Activated CD4-positive, alpha-beta memory T cell treated with anti-CD3 and anti-CD28 coated beads for 36 hours (primary cell): ENCODE measurements at regions of chr14 and their contacts with region 1.

Region 1: DNA sequence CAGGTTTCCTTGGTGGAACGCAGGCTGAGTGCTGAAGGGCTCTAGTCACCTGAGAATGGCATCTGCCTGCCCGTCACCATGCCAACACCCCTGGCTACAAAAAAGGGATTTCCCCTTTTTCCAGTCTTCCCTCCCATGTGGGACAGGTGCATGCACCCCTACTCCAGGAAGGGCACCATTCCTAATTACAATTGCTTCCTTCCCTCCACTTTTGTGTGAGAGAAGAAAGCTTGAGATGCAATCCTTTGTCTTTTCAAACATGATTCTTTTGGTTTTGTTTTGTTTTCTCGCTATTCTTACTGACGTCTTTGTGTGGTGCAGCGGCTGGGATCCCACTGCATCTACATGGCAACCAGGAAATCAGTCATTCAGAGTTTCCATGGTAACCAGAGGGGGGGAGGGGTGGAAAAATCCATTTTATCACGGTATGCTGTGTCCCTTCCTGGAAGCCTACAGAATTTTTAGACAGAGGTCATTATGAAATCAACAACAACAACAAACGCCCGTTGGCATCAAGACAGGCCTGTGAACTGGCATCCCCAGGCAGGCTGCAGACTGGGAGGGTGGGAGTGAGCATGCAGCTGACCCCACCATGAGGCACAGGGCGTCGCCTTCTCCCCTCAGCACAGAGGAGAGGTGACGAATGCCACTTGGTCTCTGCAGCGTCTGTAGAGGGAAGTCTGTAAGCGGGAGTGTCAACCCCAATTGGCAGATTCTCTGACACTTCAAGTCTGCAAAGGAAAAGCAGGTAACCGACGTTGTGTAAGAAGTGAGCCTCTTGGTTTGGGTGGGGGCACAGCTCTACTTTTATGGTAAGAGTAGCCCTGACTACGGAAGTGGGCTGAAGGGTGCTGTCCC is 13.6 kb upstream of the GNG2 start:
- DNase-seq: peak; percentile 91
- H3K4me3 Mint-ChIP-seq: peak overlapping the region; percentile 87
- H3K27ac Mint-ChIP-seq: peak overlapping the region; percentile 98
- H3K4me1 Mint-ChIP-seq: peaks cover 75% of the 10 kb centered on the region
- H3K27me3 Mint-ChIP-seq: peaks cover 2% of the 10 kb centered on the region

Region 2: DNA sequence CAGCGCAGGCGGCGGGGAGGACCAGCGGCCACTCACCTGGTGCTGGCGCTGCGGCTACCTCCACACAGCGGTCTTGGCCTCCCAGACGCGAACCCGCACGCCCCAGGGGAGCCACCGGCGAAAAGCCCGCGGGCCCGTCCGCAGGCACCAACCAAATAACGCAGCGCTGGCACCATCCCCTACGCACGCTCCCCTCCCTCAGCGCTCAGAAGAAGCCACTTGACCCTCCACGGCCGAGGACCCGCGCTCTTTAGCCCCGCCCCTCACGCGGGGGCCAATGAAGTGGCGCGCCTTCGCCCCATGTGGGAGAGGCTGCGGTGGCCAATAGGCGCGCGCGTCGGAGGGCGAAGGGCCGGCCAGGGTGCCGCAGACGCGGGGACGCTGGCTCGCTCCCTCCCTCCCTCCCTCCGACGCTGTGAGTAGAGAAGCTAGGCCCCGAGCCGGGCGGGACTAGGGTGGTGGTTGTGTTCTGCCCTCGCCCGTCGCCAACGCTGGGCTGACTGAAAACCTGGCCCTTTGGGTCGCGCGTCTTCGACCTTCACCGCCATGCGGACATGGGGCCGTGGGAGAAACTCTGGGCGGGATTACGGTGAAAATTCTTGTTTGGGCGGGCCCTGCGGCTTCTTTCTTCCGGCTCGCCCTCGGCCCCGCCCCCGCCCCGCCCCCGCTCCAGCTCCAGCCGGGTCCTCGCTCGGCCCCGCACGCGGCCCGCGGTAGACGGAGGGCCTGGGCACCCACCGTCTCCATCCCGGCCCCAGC is 1534.7 kb before region 1 on chr14 and contains the starts of genes DMAC2L and L2HGDH:
- CTCF ChIA-PET with region 1: no interaction called
- POLR2A ChIA-PET with region 1: no interaction called
- intact Hi-C with region 1: loop called (anchors 5 kb)
- DNase-seq: peak; percentile 93
- H3K4me3 Mint-ChIP-seq: peak within 1 kb of the TSS; percentile 96
- H3K27ac Mint-ChIP-seq: peak within 1 kb of the TSS; percentile 94
- H3K4me1 Mint-ChIP-seq: peaks cover 37% of the 10 kb centered on the region
- H3K27me3 Mint-ChIP-seq: no peaks in the 10 kb centered on the region
- total RNA-seq, gene DMAC2L: 13.4 to 13.9 TPM
- total RNA-seq, gene L2HGDH: 15.0 to 15.2 TPM

Region 3: GRCh38 chr14:51651388-51652167 is 195.3 kb before region 1 on chr14 and contains the start of gene FRMD6:
- CTCF ChIA-PET with region 1: no interaction called
- POLR2A ChIA-PET with region 1: no interaction called
- intact Hi-C with region 1: loop called (anchors 2 kb)
- DNase-seq: peak; percentile 89
- H3K4me3 Mint-ChIP-seq: peak within 1 kb of the TSS; percentile 78
- H3K27ac Mint-ChIP-seq: peak within 1 kb of the TSS; percentile 5
- H3K4me1 Mint-ChIP-seq: peaks cover 26% of the 10 kb centered on the region
- H3K27me3 Mint-ChIP-seq: peaks cover 17% of the 10 kb centered on the region
- total RNA-seq, gene FRMD6: 3.2 to 3.4 TPM

Region 4: GRCh38 chr14:51828017-51828797 is 18.7 kb before region 1 on chr14:
- CTCF ChIA-PET with region 1: interaction called, 11 read pairs
- POLR2A ChIA-PET with region 1: interaction called, 23 read pairs
- intact Hi-C with region 1: loop called (anchors 1 kb)
- DNase-seq: peak; percentile 90
- H3K4me3 Mint-ChIP-seq: no peak overlapping the region
- H3K27ac Mint-ChIP-seq: no peak overlapping the region
- H3K4me1 Mint-ChIP-seq: no peaks in the 10 kb centered on the region
- H3K27me3 Mint-ChIP-seq: no peaks in the 10 kb centered on the region

Region 5: GRCh38 chr14:51873221-51873893 is 26.5 kb after region 1 on chr14:
- CTCF ChIA-PET with region 1: interaction called, 5 read pairs
- POLR2A ChIA-PET with region 1: interaction called, 17 read pairs
- intact Hi-C with region 1: loop called (anchors 1 kb)
- DNase-seq: peak; percentile 68
- H3K4me3 Mint-ChIP-seq: peak overlapping the region; percentile 30
- H3K27ac Mint-ChIP-seq: peak overlapping the region; percentile 85
- H3K4me1 Mint-ChIP-seq: peaks cover 60% of the 10 kb centered on the region
- H3K27me3 Mint-ChIP-seq: no peaks in the 10 kb centered on the region

Region 6: GRCh38 chr14:51897791-51898355 is 51.0 kb after region 1 on chr14:
- CTCF ChIA-PET with region 1: no interaction called
- POLR2A ChIA-PET with region 1: no interaction called
- intact Hi-C with region 1: no loop called
- DNase-seq: no peak
- H3K4me3 Mint-ChIP-seq: no peak overlapping the region
- H3K27ac Mint-ChIP-seq: peak overlapping the region; percentile 10
- H3K4me1 Mint-ChIP-seq: peaks cover 65% of the 10 kb centered on the region
- H3K27me3 Mint-ChIP-seq: no peaks in the 10 kb centered on the region

Region 7: DNA sequence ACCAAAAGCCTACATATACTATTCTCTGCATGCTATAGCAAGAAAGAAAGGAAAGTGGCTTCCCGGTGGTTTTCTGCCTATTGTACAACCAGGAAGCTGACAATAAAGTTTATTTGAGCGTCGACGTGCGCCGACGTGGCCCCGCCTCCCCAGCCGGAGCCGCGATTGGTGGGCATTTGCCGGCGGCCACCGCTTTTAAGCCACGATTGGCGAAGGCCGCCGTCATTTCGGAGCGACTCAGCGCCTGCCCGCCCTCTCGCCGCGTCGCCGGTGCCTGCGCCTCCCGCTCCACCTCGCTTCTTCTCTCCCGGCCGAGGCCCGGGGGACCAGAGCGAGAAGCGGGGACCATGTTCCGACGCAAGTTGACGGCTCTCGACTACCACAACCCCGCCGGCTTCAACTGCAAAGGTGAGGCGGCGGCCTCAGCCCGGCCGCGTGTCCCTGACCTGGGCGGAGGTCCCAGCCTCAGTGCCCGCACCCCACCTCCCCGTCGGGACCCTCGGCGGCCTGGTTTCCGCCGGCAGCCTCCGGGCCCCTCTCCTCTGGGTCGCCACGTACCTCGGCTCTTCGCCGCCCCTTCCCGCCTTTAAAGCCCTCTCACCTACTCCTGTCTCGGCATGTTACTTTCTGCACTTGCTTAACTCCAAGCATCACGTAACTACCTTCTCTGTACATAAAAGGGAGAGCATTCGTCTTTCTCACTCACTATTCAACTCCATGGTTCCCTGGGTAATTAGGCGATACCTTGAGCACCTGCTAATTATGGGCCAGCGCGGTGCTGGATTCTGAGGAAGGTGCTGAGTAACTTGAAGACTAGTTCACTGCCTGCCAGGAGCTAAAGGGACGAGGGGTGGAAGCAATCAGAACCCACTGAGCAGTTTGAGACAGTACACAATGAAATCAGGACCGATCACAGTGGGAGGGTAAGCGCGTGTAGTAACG is 142.7 kb after region 1 on chr14 and contains the start of gene RTRAF:
- CTCF ChIA-PET with region 1: no interaction called
- POLR2A ChIA-PET with region 1: interaction called, 3 read pairs
- intact Hi-C with region 1: loop called (anchors 2 kb)
- DNase-seq: peak; percentile 94
- H3K4me3 Mint-ChIP-seq: peak within 1 kb of the TSS; percentile 89
- H3K27ac Mint-ChIP-seq: peak within 1 kb of the TSS; percentile 79
- H3K4me1 Mint-ChIP-seq: peaks cover 35% of the 10 kb centered on the region
- H3K27me3 Mint-ChIP-seq: no peaks in the 10 kb centered on the region
- total RNA-seq, gene RTRAF: 222 to 238 TPM

Region 8: DNA sequence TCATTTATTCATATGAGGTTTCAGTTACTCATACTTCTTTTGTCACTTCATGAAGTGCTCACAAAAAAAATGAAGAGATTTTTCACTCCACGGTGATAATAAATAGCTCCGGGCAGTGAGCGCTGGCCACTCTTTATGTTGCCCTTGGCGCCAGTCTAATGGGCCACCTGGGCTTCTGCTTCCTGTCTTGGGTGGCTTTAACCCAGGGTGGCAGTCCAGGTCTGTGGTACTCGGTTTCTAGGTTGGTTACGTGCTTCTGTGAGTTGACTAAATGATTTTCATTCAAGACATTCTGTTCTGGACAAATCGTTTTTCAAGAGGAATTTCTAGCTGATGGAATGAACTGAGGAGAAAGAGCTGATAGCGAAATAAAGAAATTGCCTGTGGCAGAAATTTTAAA is 256.6 kb after region 1 on chr14:
- CTCF ChIA-PET with region 1: no interaction called
- POLR2A ChIA-PET with region 1: no interaction called
- intact Hi-C with region 1: no loop called
- DNase-seq: no peak
- H3K4me3 Mint-ChIP-seq: no peak overlapping the region
- H3K27ac Mint-ChIP-seq: no peak overlapping the region
- H3K4me1 Mint-ChIP-seq: no peaks in the 10 kb centered on the region
- H3K27me3 Mint-ChIP-seq: no peaks in the 10 kb centered on the region